ENCODE measurements at regions of chr6 and their contacts with region 1.

Region 1: DNA sequence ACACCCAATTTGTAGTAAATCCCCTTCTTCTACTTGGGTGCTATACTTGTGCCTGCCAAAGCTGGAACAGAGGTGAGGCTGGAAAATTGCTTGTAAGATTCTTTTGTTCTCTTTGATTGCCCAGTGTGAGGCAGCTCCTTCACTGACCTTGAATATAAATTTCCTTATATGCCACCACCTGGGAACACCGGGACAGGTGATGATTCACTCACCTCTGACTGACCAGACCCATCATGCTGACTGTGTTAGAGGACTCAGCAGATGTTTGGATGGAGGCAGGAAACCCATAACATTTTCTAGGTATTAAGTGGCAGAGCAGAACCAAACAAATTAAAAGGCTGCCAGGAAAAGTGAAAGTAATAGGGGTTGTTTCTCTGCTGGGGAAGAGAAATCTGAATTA is 120.9 kb downstream of the GRM1 start:
- DNase-seq: peak; percentile 8
- H3K4me3 ChIP-seq: no peak overlapping the region
- H3K27ac ChIP-seq: no peak overlapping the region
- H3K4me1 ChIP-seq: no peaks in the 10 kb centered on the region
- H3K27me3 ChIP-seq: peaks cover 3% of the 10 kb centered on the region
- CTCF ChIP-seq: no peak

Region 2: GRCh38 chr6:146017672-146018071 is 132.1 kb before region 1 on chr6:
- CTCF ChIA-PET with region 1: no interaction called
- dilution Hi-C with region 1: no loop called
- in situ Hi-C with region 1: no loop called
- intact Hi-C with region 1: no loop called
- DNase-seq: no peak
- H3K4me3 ChIP-seq: no peak overlapping the region
- H3K27ac ChIP-seq: no peak overlapping the region
- H3K4me1 ChIP-seq: no peaks in the 10 kb centered on the region
- H3K27me3 ChIP-seq: peaks cover 2% of the 10 kb centered on the region
- CTCF ChIP-seq: no peak

Region 3: DNA sequence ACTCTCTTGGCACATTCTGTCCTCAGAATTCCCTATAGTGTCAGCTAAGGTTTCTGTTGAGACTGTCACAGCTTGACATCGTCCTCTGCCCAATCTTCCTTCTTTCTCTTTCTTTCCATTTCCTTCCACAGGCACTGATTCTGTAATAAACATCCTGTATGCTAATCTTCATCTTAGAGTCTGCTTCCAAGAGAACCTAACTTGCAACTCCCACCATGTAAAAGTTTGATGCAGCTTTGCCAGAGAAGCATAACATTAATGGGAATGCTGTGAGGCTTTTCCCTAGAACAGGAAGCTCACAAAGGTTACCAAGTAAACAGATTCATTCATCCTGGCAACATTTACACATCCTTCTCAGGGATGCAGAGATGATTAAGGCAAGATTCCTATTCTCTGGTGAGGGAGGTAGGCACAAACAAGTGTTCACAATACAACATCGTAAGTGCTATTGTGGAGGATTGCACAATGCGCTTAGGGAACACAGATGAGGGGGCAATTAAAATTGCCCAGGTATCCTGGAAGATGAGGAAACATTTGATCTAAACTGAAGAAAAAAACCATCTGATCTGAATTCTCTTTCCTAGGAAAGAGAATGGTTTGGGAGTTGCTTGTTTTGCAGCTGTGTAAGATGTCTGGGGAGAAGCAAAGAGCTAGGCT is 46.2 kb before region 1 on chr6:
- CTCF ChIA-PET with region 1: no interaction called
- dilution Hi-C with region 1: loop called (anchors 5 kb)
- in situ Hi-C with region 1: no loop called
- intact Hi-C with region 1: no loop called
- DNase-seq: no peak
- H3K4me3 ChIP-seq: no peak overlapping the region
- H3K27ac ChIP-seq: no peak overlapping the region
- H3K4me1 ChIP-seq: no peaks in the 10 kb centered on the region
- H3K27me3 ChIP-seq: no peaks in the 10 kb centered on the region
- CTCF ChIP-seq: no peak

Region 4: DNA sequence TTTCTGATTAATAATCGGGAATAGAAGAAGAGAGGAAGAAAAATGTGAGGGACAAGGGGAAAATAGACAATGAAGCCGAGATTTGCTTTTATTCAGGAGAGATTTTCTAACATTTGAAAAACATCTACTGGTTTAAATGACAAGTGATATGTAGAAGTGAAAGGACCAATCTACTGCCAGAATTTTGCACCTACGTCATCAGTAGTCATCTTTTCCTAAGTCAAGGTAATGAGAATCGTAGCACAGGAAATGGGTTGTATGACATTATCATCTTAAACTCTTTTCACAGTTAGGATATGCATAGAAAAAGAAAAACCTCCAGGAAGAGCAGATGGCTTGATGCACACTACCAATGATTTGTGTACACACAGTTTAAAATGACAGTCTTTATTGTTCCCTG is 348.5 kb after region 1 on chr6:
- CTCF ChIA-PET with region 1: no interaction called
- dilution Hi-C with region 1: no loop called
- in situ Hi-C with region 1: no loop called
- intact Hi-C with region 1: no loop called
- DNase-seq: no peak
- H3K4me3 ChIP-seq: no peak overlapping the region
- H3K27ac ChIP-seq: no peak overlapping the region
- H3K4me1 ChIP-seq: no peaks in the 10 kb centered on the region
- H3K27me3 ChIP-seq: no peaks in the 10 kb centered on the region
- CTCF ChIP-seq: no peak

Measured in mammary epithelial cell (primary cell).